ENCODE measurements at regions of chr15 and their contacts with region 1.

Region 1: DNA sequence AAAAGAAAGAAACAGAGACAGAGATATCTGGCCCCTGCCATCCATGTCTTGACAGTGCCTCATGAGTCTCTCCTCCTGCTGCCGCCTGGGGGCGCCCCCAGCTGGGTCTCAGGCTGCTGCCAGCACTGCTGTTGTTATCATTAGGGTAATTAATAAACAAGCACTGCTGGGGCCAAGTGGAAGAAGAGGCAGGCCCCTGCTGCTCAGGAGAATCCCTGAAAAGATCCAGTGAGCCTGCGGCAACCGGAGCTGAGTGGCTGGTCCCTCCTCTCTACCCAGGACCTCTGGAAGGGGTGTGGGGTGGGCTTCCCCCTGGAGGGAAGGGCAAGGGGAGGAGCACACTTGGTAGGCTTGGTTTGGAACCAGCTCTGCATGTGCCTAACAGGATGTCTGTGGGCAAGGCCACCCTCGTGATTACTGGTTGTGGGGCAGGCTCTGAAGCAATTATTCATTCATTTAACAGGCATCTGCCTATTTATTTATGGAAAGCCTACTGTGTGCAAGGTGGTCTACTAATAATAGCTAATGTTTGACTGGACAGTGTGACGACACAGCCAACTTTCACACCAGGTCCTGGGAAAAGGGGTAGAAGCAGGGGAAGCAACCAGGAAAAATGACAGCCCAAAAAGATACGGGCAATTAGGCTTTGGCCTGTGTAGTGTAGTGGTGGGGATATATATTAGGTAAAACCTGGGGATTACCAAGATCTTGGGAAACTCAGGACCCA is 1.2 kb upstream of the TYRO3 start:
- DNase-seq: peak; percentile 52
- ATAC-seq: peak; percentile 77
- H3K4me3 ChIP-seq: peak overlapping the region; percentile 67 to 68
- H3K27ac ChIP-seq: peak overlapping the region; percentile 50; the same call in 1 of the 2 replicates
- H3K4me1 ChIP-seq: peaks cover 7 to 21% of the 10 kb centered on the region in 2 experiments; a peak in 3 of 4 replicates
- H3K27me3 ChIP-seq: no peaks in the 10 kb centered on the region
- CTCF ChIP-seq: peak; percentile 75 to 98 (median 97); a peak in 5 of 6 replicates
- POLR2A ChIP-seq: no peak
- RAD21 ChIP-seq: peak; percentile 80

Region 2: GRCh38 chr15:41546846-41547786 is 10.7 kb before region 1 on chr15:
- CTCF ChIA-PET with region 1: interaction called, 20 read pairs
- POLR2A ChIA-PET with region 1: interaction called, 6 read pairs
- RAD21 ChIA-PET with region 1: interaction called in 1 of 2 experiments, 3 read pairs
- intact Hi-C with region 1: no loop called
- DNase-seq: peak; percentile 33
- ATAC-seq: 0 out of 2 replicates have a peak, but pooled peaks have one; percentile 20
- H3K4me3 ChIP-seq: peak overlapping the region in 1 of 2 experiments; percentile 30; a peak in 2 of 4 replicates
- H3K27ac ChIP-seq: no peak overlapping the region
- H3K4me1 ChIP-seq: peaks cover 7 to 28% of the 10 kb centered on the region in 2 experiments
- H3K27me3 ChIP-seq: no peaks in the 10 kb centered on the region
- CTCF ChIP-seq: no peak
- POLR2A ChIP-seq: no peak
- RAD21 ChIP-seq: no peak

Region 3: DNA sequence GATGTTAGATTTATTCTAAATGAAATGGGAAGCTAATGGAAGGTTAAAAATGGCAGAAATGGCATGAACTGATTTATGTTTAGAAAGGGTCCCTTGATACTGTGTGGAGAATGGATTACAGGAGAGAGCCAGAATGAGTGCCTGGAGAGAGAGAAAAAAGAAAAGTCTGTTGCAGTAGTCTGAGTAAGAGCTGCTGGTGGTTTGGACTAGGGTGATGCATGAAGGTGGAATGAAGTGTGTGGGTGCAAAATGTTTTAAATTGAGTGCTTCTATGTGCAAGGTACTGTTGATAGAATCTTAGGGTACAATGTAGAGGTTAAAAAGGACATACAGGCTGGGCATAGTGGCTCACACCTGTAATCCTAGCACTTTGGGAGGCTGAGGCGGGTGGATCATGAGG is 90.9 kb after region 1 on chr15:
- CTCF ChIA-PET with region 1: no interaction called
- POLR2A ChIA-PET with region 1: no interaction called
- RAD21 ChIA-PET with region 1: no interaction called
- intact Hi-C with region 1: loop called (anchors 10 kb)
- DNase-seq: no peak
- ATAC-seq: no peak
- H3K4me3 ChIP-seq: no peak overlapping the region
- H3K27ac ChIP-seq: no peak overlapping the region
- H3K4me1 ChIP-seq: peaks cover 0 to 12% of the 10 kb centered on the region in 2 experiments; a peak in 2 of 4 replicates
- H3K27me3 ChIP-seq: no peaks in the 10 kb centered on the region
- CTCF ChIP-seq: no peak
- POLR2A ChIP-seq: no peak
- RAD21 ChIP-seq: no peak

Measured in HCT116 (cell line).